PC-3 (cell line): ENCODE measurements at regions of chr15 and their contacts with region 1.

Region 1: GRCh38 chr15:67303490-67304363 is 49.1 kb downstream of the IQCH start:
- DNase-seq: peak; percentile 58
- ATAC-seq: peak; percentile 58; the same call in 1 of the 2 replicates
- H3K4me3 ChIP-seq: no peak overlapping the region
- H3K27ac ChIP-seq: no peak overlapping the region
- H3K4me1 ChIP-seq: no peaks in the 10 kb centered on the region
- H3K27me3 ChIP-seq: no peaks in the 10 kb centered on the region
- CTCF ChIP-seq: peak; percentile 75

Region 2: GRCh38 chr15:67240235-67241131 is 63.2 kb before region 1 on chr15:
- CTCF ChIA-PET with region 1: interaction called, 4 read pairs
- POLR2A ChIA-PET with region 1: no interaction called
- intact Hi-C with region 1: loop called (anchors 2 kb)
- DNase-seq: peak; percentile 40
- ATAC-seq: peak; percentile 73
- H3K4me3 ChIP-seq: no peak overlapping the region
- H3K27ac ChIP-seq: no peak overlapping the region
- H3K4me1 ChIP-seq: peaks cover 21% of the 10 kb centered on the region; the same call in 1 of the 2 replicates
- H3K27me3 ChIP-seq: no peaks in the 10 kb centered on the region
- CTCF ChIP-seq: peak; percentile 72